ENCODE measurements at regions of chr10 and their contacts with region 1.

Region 1: GRCh38 chr10:49362596-49363260 is 33.2 kb downstream of the DRGX start:
- DNase-seq: peak; percentile 69
- ATAC-seq: peak; percentile 96
- H3K4me3 ChIP-seq: no peak overlapping the region
- H3K27ac ChIP-seq: no peak overlapping the region; the same call in 1 of the 2 replicates
- H3K4me1 ChIP-seq: peaks cover 16% of the 10 kb centered on the region
- H3K27me3 ChIP-seq: no peaks in the 10 kb centered on the region
- CTCF ChIP-seq: no peak
- EP300 ChIP-seq: peak in 1 of 2 experiments; percentile 88; a peak in 2 of 4 replicates
- POLR2A ChIP-seq: no peak
- RAD21 ChIP-seq: no peak

Region 2: GRCh38 chr10:49115015-49115795 is 247.5 kb before region 1 on chr10 and contains the start of gene VSTM4:
- CTCF ChIA-PET with region 1: no interaction called
- POLR2A ChIA-PET with region 1: no interaction called
- RAD21 ChIA-PET with region 1: no interaction called
- SMC1A ChIA-PET with region 1: no interaction called
- in situ Hi-C with region 1: no loop called
- intact Hi-C with region 1: no loop called
- DNase-seq: no peak
- ATAC-seq: no peak
- H3K4me3 ChIP-seq: no peak within 1 kb of the TSS
- H3K27ac ChIP-seq: no peak within 1 kb of the TSS
- H3K4me1 ChIP-seq: no peaks in the 10 kb centered on the region
- H3K27me3 ChIP-seq: peaks cover 5 to 17% of the 10 kb centered on the region in 2 experiments
- CTCF ChIP-seq: no peak
- EP300 ChIP-seq: no peak
- POLR2A ChIP-seq: no peak
- RAD21 ChIP-seq: no peak
- polyA plus RNA-seq, gene VSTM4: 0.02 TPM in 1 of 2 experiments, not detected in the other

Region 3: DNA sequence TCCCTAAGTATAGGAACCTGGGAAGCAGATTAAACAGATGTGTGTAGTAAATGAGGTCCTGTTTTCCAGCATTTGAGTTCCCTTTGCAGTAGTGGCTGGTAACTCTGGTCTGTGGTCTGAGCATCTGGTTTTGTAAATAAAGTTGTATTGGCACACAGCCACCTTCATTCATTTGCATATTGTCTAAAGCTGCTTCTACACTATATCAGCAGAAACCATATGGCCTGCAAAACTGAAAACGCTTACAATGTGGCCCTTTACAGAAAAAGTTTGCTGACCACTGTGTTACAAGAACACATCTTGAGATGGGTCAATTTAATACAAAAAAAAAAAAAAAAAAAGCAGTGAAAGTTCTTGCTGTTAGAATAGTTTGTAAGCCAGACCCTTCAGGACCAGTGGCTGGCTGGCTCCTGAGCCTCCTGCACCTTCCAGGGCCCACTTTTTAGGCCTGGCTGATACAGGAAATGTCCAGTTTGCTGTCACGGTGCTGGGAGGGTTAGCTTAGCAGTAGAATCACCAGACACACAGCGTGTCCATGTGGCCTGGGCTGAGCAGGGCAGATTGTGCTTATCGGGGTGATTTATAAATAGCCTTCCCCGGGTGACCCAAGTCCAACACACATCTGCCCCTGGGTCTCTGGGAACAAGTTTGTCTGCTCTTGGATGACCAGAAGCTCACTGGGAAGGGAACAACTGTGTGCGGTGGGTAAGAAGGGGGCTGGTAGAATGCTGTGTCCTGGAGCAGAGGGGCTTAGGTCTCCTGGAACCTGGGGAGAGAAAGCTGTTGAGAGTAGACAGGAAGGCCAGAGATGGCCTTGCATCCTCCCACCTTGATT is 62.4 kb before region 1 on chr10:
- CTCF ChIA-PET with region 1: no interaction called
- POLR2A ChIA-PET with region 1: no interaction called
- RAD21 ChIA-PET with region 1: no interaction called
- SMC1A ChIA-PET with region 1: no interaction called
- in situ Hi-C with region 1: no loop called
- intact Hi-C with region 1: loop called (anchors 5 kb)
- DNase-seq: peak; percentile 59
- ATAC-seq: peak; percentile 81
- H3K4me3 ChIP-seq: no peak overlapping the region
- H3K27ac ChIP-seq: no peak overlapping the region
- H3K4me1 ChIP-seq: peaks cover 13% of the 10 kb centered on the region
- H3K27me3 ChIP-seq: no peaks in the 10 kb centered on the region; a peak in 2 of 4 replicates
- CTCF ChIP-seq: no peak
- EP300 ChIP-seq: no peak
- POLR2A ChIP-seq: no peak
- RAD21 ChIP-seq: no peak

Region 4: DNA sequence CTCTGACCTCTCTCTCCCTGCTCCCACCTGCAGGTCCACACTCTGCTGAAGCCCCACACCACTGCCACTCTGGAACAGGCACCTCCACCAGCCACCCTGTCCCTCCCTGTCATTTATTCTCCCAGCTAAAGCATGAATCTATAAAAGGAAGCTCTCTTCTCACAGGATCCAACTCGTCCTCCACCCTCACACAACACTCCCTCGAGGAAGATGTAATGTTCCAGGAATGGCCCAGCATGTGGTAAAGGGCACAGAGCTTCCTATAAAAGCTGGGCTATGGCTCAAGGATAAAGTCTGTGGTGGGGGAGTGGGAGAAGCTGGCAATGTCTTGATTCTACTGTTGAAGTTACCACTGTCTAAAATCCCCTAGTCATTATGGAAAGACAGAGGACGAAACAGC is 108.8 kb after region 1 on chr10:
- CTCF ChIA-PET with region 1: no interaction called
- POLR2A ChIA-PET with region 1: no interaction called
- RAD21 ChIA-PET with region 1: no interaction called
- SMC1A ChIA-PET with region 1: no interaction called
- in situ Hi-C with region 1: no loop called
- intact Hi-C with region 1: no loop called
- DNase-seq: no peak
- ATAC-seq: no peak
- H3K4me3 ChIP-seq: no peak overlapping the region
- H3K27ac ChIP-seq: no peak overlapping the region
- H3K4me1 ChIP-seq: no peaks in the 10 kb centered on the region
- H3K27me3 ChIP-seq: no peaks in the 10 kb centered on the region
- CTCF ChIP-seq: no peak
- EP300 ChIP-seq: no peak
- POLR2A ChIP-seq: no peak
- RAD21 ChIP-seq: no peak

Region 5: GRCh38 chr10:49500418-49500817 is 137.7 kb after region 1 on chr10:
- CTCF ChIA-PET with region 1: no interaction called
- POLR2A ChIA-PET with region 1: no interaction called
- RAD21 ChIA-PET with region 1: no interaction called
- SMC1A ChIA-PET with region 1: no interaction called
- in situ Hi-C with region 1: no loop called
- intact Hi-C with region 1: no loop called
- DNase-seq: no peak
- ATAC-seq: no peak
- H3K4me3 ChIP-seq: no peak overlapping the region
- H3K27ac ChIP-seq: no peak overlapping the region
- H3K4me1 ChIP-seq: no peaks in the 10 kb centered on the region
- H3K27me3 ChIP-seq: no peaks in the 10 kb centered on the region
- CTCF ChIP-seq: no peak
- EP300 ChIP-seq: no peak
- POLR2A ChIP-seq: no peak
- RAD21 ChIP-seq: no peak

Region 6: GRCh38 chr10:49538381-49539319 is 175.9 kb after region 1 on chr10 and contains the start of gene ERCC6:
- CTCF ChIA-PET with region 1: no interaction called
- POLR2A ChIA-PET with region 1: no interaction called
- RAD21 ChIA-PET with region 1: no interaction called
- SMC1A ChIA-PET with region 1: no interaction called
- in situ Hi-C with region 1: no loop called
- intact Hi-C with region 1: no loop called
- DNase-seq: peak; percentile 91
- ATAC-seq: peak; percentile 90
- H3K4me3 ChIP-seq: peak within 1 kb of the TSS; percentile 64
- H3K27ac ChIP-seq: peak within 1 kb of the TSS; percentile 82
- H3K4me1 ChIP-seq: peaks cover 32% of the 10 kb centered on the region
- H3K27me3 ChIP-seq: no peaks in the 10 kb centered on the region
- CTCF ChIP-seq: 0 out of 6 replicates have a peak, but pooled peaks of 1 of the 3 experiments have one; percentile 1
- EP300 ChIP-seq: peak; percentile 51 to 68; a peak in 2 of 4 replicates
- POLR2A ChIP-seq: peak; percentile 91
- RAD21 ChIP-seq: no peak
- polyA plus RNA-seq, gene ERCC6: 4.3 to 6.6 TPM

Measured in GM12878 (cell line).